CD14-positive monocyte (primary cell): ENCODE measurements at regions of chr12 and their contacts with region 1.

Region 1: GRCh38 chr12:71754461-71755145 is at the start of gene RAB21:
- DNase-seq: peak; percentile 97 to 99 (median 98)
- H3K4me3 ChIP-seq: peak within 1 kb of the TSS; percentile 79 to 92 (median 80)
- H3K4me3 Mint-ChIP-seq: peak within 1 kb of the TSS; percentile 90 to 93
- H3K27ac ChIP-seq: peak within 1 kb of the TSS; percentile 96 to 100
- H3K27ac Mint-ChIP-seq: peak within 1 kb of the TSS; percentile 98 to 100 (median 99)
- H3K4me1 ChIP-seq: peaks cover 19 to 23% of the 10 kb centered on the region in 2 donors
- H3K4me1 Mint-ChIP-seq: peaks cover 27% of the 10 kb centered on the region
- H3K27me3 ChIP-seq: no peaks in the 10 kb centered on the region
- H3K27me3 Mint-ChIP-seq: peaks cover 3 to 16% (median 5%) of the 10 kb centered on the region in 3 donors
- CTCF ChIP-seq: peak; percentile 6
- polyA plus RNA-seq, gene RAB21: 10.8 to 36.0 (median 31.1) TPM

Region 2: DNA sequence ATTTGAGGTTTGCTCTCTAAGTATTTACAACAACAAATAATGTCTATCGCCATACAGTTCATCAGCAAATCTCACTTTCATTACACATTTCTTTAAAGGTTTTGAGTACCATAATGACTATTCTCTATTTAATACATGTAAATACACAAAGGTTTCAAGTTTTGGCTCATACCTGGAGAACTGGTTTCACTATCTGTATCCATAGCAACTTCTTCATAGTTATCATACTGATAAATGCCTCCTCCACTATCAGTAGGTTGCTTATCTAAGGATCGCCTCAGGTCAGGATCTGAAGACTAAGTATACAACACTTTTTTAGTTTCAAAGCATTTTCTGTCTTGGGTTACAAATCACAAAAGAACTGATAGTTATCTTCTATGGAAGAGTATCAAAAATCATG is 112.3 kb before region 1 on chr12:
- intact Hi-C with region 1: loop called in 1 of 2 experiments (anchors 10 kb)
- DNase-seq: no peak
- H3K4me3 ChIP-seq: no peak overlapping the region
- H3K4me3 Mint-ChIP-seq: no peak overlapping the region
- H3K27ac ChIP-seq: peak overlapping the region in 1 of 2 donors; percentile 4
- H3K27ac Mint-ChIP-seq: no peak overlapping the region
- H3K4me1 ChIP-seq: peaks cover 8 to 21% of the 10 kb centered on the region in 2 donors
- H3K4me1 Mint-ChIP-seq: peaks cover 13% of the 10 kb centered on the region
- H3K27me3 ChIP-seq: no peaks in the 10 kb centered on the region
- H3K27me3 Mint-ChIP-seq: peaks cover 0 to 2% (median 0%) of the 10 kb centered on the region in 3 donors
- CTCF ChIP-seq: no peak

Region 3: DNA sequence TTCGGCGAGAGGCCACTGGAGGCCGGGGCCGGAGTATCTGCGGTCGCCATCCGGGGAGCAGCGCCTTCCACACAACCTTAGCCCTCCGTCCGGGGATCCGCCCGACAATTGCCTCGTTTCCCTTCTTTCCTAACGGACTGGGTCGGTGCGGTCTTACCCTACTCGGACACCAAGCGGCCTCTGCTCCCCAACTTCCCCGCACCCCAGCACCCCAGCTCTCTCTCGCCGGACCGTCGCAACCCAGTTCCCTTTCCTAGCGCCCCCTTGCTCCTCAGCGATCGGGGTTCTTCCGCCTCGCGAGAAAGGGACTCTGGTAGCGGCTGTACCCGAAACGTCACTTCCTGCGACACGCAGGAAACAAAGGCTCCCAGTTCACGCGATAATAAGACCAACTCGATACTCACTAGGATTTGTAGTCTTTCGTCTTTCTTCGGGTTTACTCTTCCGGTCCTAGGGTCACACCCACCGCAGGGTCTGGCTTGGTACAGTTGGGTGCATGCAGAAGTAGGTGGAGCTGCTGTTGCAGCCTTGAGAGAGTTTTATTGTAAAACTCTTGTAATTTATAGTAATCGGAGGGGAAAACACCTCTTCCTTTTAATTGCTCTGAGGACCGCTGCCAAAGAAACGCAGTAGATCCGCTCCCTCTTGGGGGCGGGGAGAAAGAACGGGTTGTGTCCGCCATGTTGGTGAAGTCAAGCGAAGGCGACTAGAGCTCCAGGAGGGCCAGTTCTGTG is 90.9 kb before region 1 on chr12 and contains the start of gene ZFC3H1:
- intact Hi-C with region 1: loop called in 1 of 2 experiments (anchors 10 kb)
- DNase-seq: peak; percentile 99 to 100 (median 99)
- H3K4me3 ChIP-seq: peak within 1 kb of the TSS; percentile 72 to 88 (median 84)
- H3K4me3 Mint-ChIP-seq: peak within 1 kb of the TSS; percentile 94 to 100
- H3K27ac ChIP-seq: peak within 1 kb of the TSS; percentile 92 to 100
- H3K27ac Mint-ChIP-seq: peak within 1 kb of the TSS; percentile 100
- H3K4me1 ChIP-seq: peaks cover 24 to 27% of the 10 kb centered on the region in 2 donors
- H3K4me1 Mint-ChIP-seq: peaks cover 22% of the 10 kb centered on the region
- H3K27me3 ChIP-seq: no peaks in the 10 kb centered on the region
- H3K27me3 Mint-ChIP-seq: peaks cover 0 to 2% (median 2%) of the 10 kb centered on the region in 3 donors
- CTCF ChIP-seq: peak; percentile 11
- polyA plus RNA-seq, gene ZFC3H1: 12.5 to 57.0 (median 16.3) TPM

Region 4: GRCh38 chr12:71685914-71686665 is 68.5 kb before region 1 on chr12 and contains the start of gene TMEM19:
- intact Hi-C with region 1: loop called (anchors 5 to 10 kb)
- DNase-seq: peak; percentile 83 to 91 (median 87)
- H3K4me3 ChIP-seq: peak within 1 kb of the TSS; percentile 43 to 80 (median 74)
- H3K4me3 Mint-ChIP-seq: peak within 1 kb of the TSS; percentile 83 to 96
- H3K27ac ChIP-seq: peak within 1 kb of the TSS; percentile 79 to 82
- H3K27ac Mint-ChIP-seq: peak within 1 kb of the TSS; percentile 86 to 99 (median 95)
- H3K4me1 ChIP-seq: peaks cover 31 to 43% of the 10 kb centered on the region in 2 donors
- H3K4me1 Mint-ChIP-seq: peaks cover 24% of the 10 kb centered on the region
- H3K27me3 ChIP-seq: no peaks in the 10 kb centered on the region
- H3K27me3 Mint-ChIP-seq: peaks cover 0 to 2% (median 0%) of the 10 kb centered on the region in 3 donors
- CTCF ChIP-seq: no peak
- polyA plus RNA-seq, gene TMEM19: 9.1 to 39.7 (median 25.4) TPM

Region 5: GRCh38 chr12:71840231-71840847 is 85.7 kb after region 1 on chr12:
- intact Hi-C with region 1: loop called in 1 of 2 experiments (anchors 10 kb)
- DNase-seq: peak; percentile 56 to 86 (median 77)
- H3K4me3 ChIP-seq: peak overlapping the region; percentile 88 to 97 (median 95)
- H3K4me3 Mint-ChIP-seq: peak overlapping the region; percentile 81 to 93
- H3K27ac ChIP-seq: peak overlapping the region; percentile 98 to 99
- H3K27ac Mint-ChIP-seq: peak overlapping the region; percentile 95 to 99 (median 98)
- H3K4me1 ChIP-seq: peaks cover 21 to 24% of the 10 kb centered on the region in 2 donors
- H3K4me1 Mint-ChIP-seq: peaks cover 23% of the 10 kb centered on the region
- H3K27me3 ChIP-seq: no peaks in the 10 kb centered on the region
- H3K27me3 Mint-ChIP-seq: peaks cover 0 to 2% (median 0%) of the 10 kb centered on the region in 3 donors
- CTCF ChIP-seq: no peak

Region 6: GRCh38 chr12:71904629-71905028 is 150.0 kb after region 1 on chr12:
- intact Hi-C with region 1: no loop called
- DNase-seq: no peak
- H3K4me3 ChIP-seq: no peak overlapping the region
- H3K4me3 Mint-ChIP-seq: no peak overlapping the region
- H3K27ac ChIP-seq: no peak overlapping the region
- H3K27ac Mint-ChIP-seq: peak overlapping the region in 4 of 7 donors; percentile 5 to 37 (median 15)
- H3K4me1 ChIP-seq: no peaks in the 10 kb centered on the region
- H3K4me1 Mint-ChIP-seq: peaks cover 8% of the 10 kb centered on the region
- H3K27me3 ChIP-seq: no peaks in the 10 kb centered on the region
- H3K27me3 Mint-ChIP-seq: no peaks in the 10 kb centered on the region
- CTCF ChIP-seq: no peak

Region 7: DNA sequence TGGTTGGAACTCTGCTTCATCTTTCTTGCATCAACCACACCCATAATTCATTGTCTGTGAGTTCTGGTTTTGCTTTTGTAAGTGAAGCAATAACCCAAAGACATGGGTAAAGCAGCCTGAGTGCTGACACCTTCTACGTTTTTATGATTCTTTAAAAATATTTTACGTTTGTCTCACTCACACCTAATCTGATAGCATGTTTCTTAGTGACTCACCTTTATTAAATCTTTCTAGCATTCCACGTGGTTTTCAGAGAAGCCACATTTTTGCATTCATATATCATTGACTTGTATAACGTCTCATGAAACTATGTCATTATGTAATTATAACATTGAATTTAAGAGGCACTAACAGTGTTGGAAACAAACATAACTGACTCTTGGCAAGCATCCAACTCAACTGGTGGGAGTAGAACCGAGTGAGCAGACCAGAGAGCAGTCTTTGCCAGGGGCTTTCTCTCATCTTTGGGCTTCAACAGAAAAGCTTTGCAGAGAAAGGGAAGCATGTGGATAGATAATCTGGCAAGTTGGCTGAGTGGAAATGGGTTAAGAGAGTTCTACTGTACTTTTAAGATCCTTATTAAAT is 302.8 kb after region 1 on chr12:
- intact Hi-C with region 1: no loop called
- DNase-seq: no peak
- H3K4me3 ChIP-seq: no peak overlapping the region
- H3K4me3 Mint-ChIP-seq: no peak overlapping the region
- H3K27ac ChIP-seq: no peak overlapping the region
- H3K27ac Mint-ChIP-seq: no peak overlapping the region
- H3K4me1 ChIP-seq: no peaks in the 10 kb centered on the region
- H3K4me1 Mint-ChIP-seq: no peaks in the 10 kb centered on the region
- H3K27me3 ChIP-seq: no peaks in the 10 kb centered on the region
- H3K27me3 Mint-ChIP-seq: peaks cover 0 to 2% (median 0%) of the 10 kb centered on the region in 3 donors
- CTCF ChIP-seq: no peak